Breast epithelium (tissue), 4 donors: ENCODE measurements at regions of chr12 and their contacts with region 1.

Region 1: GRCh38 chr12:58387199-58387598 is 445.8 kb downstream of the ATP23 start:
- DNase-seq: no peak
- H3K4me3 ChIP-seq: no peak overlapping the region
- H3K27ac ChIP-seq: peak overlapping the region; percentile 24 to 35
- H3K4me1 ChIP-seq: peaks cover 0 to 4% of the 10 kb centered on the region in 2 donors
- H3K27me3 ChIP-seq: no peaks in the 10 kb centered on the region
- CTCF ChIP-seq: no peak
- POLR2A ChIP-seq: no peak

Region 2: DNA sequence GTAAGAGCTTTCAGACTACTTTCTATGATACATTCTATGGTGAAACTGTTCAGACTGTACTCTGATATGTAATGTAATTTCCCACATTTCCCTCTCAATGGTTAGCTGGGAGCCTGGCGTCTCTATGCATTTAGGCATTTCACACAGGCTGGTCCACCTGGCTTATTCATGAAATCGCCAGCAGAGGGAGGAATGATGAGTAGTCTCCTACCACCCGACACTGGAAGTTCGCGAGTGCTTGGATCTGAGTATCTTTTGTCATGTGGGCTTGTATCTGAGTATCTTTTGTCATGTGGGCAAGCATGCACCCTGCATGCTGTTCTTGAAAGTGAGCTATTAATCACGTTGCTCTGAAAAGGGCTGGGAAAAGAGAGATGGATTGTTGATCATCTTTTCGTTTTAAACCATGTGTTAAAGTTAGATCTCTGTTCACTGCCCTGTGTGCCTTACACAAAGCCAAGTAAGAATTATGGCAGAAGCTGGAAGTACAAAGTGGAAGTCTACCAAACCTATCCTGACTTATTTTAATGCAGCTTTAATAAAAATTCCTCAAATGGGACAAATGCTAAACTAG is 210.8 kb before region 1 on chr12:
- intact Hi-C with region 1: no loop called
- DNase-seq: no peak
- H3K4me3 ChIP-seq: no peak overlapping the region
- H3K27ac ChIP-seq: no peak overlapping the region
- H3K4me1 ChIP-seq: peaks cover 0 to 9% of the 10 kb centered on the region in 2 donors
- H3K27me3 ChIP-seq: no peaks in the 10 kb centered on the region
- CTCF ChIP-seq: no peak
- POLR2A ChIP-seq: no peak

Region 3: GRCh38 chr12:58408516-58408915 is 21.3 kb after region 1 on chr12:
- intact Hi-C with region 1: loop called (anchors 2 kb)
- DNase-seq: peak in 1 of 2 donors; percentile 44
- H3K4me3 ChIP-seq: no peak overlapping the region
- H3K27ac ChIP-seq: peak overlapping the region in 1 of 2 donors; percentile 5
- H3K4me1 ChIP-seq: no peaks in the 10 kb centered on the region
- H3K27me3 ChIP-seq: no peaks in the 10 kb centered on the region
- CTCF ChIP-seq: no peak
- POLR2A ChIP-seq: no peak